ENCODE measurements at regions of chr2 and their contacts with region 1.

Region 1: GRCh38 chr2:205967391-205968075 is 118.4 kb downstream of the INO80D start:
- DNase-seq: peak in 1 of 2 donors; percentile 36
- H3K4me3 ChIP-seq: no peak overlapping the region
- CTCF ChIP-seq: no peak
- POLR2A ChIP-seq: no peak

Region 2: GRCh38 chr2:205474741-205475415 is 492.7 kb before region 1 on chr2:
- intact Hi-C with region 1: loop called (anchors 5 kb)
- DNase-seq: no peak
- H3K4me3 ChIP-seq: no peak overlapping the region
- CTCF ChIP-seq: no peak
- POLR2A ChIP-seq: no peak

Measured in lower leg skin (tissue), 4 donors.